GM10248 (cell line): ENCODE measurements at regions of chr17 and their contacts with region 1.

Region 1: GRCh38 chr17:49180303-49180702 is 30.1 kb downstream of the GNGT2 start:
- DNase-seq: peak; percentile 70
- CTCF ChIP-seq: peak; percentile 64

Region 2: DNA sequence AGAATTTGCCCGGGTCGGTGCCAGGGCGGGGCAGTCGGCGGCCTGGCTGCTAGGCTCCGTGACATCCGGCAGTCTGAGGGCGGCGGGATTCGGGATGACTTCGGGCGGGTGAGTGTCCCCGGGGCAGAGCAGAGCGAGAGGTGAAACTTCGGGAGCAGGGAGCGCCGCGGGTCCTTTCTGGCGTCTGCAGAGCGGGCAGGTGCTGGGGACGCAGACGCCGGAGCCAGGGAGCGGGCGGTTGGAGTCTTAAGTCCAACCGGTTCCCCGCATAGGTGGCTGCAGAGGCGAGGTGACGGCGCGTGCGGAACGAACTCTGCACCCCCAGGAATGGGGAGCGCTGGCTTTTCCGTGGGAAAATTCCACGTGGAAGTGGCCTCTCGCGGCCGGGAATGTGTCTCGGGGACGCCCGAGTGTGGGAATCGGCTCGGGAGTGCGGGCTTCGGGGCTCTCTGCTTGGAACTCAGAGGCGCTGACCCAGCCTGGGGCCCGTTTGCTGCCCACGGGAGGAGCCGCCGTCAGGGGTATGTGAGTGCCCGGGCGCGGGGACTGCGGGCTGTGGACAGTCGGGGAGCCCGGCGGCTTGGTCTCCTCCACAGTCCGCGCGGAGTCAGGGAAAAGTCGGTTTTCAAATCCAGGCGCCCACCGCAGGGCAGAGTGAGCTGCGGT is 47.5 kb before region 1 on chr17 and contains the start of gene B4GALNT2:
- CTCF ChIA-PET with region 1: no interaction called
- POLR2A ChIA-PET with region 1: no interaction called
- DNase-seq: no peak
- CTCF ChIP-seq: no peak

Region 3: DNA sequence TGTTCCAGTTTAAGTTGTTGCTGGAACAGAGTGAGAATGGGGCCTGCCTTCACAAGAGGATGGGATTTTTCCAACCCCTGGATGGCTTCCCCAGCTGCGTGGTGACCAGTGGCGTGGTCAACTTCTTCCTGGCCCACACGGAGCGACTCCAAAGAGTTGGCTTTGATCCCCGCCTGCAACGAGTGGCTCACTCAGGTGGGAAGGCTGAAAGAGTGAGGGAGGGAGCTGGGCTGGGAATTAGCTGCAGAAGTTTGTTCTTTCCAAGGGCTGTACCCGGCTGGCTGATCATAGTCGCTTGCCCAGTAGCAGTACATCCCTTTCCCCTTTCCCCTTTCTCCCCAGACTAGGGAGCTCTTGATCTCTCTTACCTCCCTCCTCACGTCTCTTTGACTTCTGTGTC is 11.6 kb before region 1 on chr17:
- CTCF ChIA-PET with region 1: interaction called, 18 read pairs
- POLR2A ChIA-PET with region 1: no interaction called
- DNase-seq: no peak
- CTCF ChIP-seq: no peak

Region 4: DNA sequence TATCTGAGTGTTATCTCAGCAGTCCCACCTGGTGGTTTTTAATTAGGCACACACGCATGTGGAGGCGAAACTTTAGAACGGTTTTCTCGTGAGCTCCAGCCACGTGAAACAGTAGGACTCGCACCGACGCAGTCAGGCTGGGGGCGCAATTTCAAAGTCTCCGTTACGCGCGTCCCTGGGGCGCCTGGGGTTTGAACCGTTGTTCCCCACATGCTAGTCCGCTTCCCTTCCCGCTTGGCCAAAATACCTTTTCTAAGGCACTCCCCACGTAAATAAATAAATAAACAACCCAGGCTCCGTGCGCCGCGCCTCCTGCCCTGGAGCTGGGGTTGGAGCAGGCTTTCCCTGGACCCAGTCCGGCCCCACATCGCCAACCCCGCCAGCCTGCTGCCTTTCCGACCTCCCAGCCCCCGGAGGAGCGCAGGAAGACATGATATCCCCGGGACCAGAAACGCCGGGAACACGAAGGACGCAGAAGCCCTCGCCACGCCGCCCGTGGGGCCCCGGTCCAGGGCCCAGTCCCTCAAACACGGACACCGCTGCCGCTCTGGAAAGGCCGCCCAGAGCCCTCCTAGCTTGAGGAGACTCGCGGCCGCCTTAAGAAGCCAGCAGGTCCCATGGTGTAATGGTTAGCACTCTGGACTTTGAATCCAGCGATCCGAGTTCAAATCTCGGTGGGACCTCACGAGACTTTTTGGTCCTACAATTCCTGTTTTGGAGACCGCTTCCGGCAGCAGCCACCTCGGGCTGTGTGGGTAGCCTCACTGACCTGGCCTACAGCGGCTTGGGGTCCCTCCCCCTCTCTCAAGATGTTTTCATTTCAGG is 11.8 kb after region 1 on chr17:
- CTCF ChIA-PET with region 1: interaction called, 35 read pairs
- POLR2A ChIA-PET with region 1: no interaction called
- DNase-seq: peak; percentile 64
- CTCF ChIP-seq: peak; percentile 46

Region 5: GRCh38 chr17:49210158-49211029 is 30.1 kb after region 1 on chr17 and contains the starts of genes ABI3 and GNGT2:
- CTCF ChIA-PET with region 1: interaction called, 23 read pairs
- POLR2A ChIA-PET with region 1: no interaction called
- DNase-seq: peak; percentile 93
- CTCF ChIP-seq: no peak

Region 6: GRCh38 chr17:49218941-49219913 is 38.9 kb after region 1 on chr17:
- CTCF ChIA-PET with region 1: interaction called, 124 read pairs
- POLR2A ChIA-PET with region 1: no interaction called
- DNase-seq: peak; percentile 73
- CTCF ChIP-seq: peak; percentile 61

Region 7: DNA sequence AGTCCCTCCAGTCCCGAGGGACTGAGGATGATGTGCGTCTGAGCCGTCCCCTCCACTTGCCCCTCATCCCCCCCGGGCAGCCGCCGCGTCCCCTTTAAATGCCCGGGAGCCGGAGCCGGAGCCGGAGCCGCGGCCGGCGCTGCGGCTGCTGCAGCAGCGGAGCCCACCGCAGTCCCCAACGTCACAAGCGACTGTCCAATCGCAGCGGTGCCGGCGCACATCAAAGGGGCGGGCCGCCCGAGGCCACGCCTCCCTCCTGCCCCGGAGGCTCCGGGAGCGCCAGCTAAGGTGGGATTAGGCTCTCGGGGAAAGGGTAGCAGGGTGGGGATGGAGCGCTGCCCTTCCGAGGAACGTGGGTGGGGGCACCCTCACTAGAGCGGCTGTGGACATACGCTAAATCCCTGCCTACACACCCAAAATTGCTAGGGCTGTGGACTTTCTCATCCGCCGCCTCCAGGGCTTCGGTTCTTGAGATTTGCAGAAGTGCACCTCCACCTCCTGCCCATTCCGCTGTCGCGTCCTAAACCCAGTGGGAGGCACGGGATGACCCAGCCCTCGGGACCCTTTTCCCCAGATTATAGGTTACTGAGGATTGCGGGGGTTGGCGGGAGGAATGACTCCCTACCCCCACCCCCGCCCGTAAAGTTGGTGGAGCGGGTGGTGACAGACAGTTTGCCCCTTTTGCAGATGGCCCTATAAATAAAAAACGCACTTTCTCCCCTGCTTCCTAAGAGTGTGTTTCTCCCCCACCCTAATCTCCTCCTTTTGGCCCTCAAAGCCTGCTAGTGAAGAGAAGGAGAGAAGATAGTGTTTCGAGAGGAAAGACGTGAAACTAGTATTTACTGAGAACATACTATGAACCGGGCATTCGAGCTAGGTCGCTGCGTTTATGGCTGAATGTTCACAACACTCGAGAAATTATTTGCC is 50.6 kb after region 1 on chr17 and contains the start of gene PHOSPHO1:
- CTCF ChIA-PET with region 1: interaction called, 124 read pairs
- POLR2A ChIA-PET with region 1: no interaction called
- DNase-seq: peak; percentile 92
- CTCF ChIP-seq: no peak

Region 8: GRCh38 chr17:49290690-49291359 is 110.5 kb after region 1 on chr17:
- CTCF ChIA-PET with region 1: interaction called, 29 read pairs
- POLR2A ChIA-PET with region 1: no interaction called
- DNase-seq: no peak
- CTCF ChIP-seq: peak; percentile 37